IMR-90 (cell line): ENCODE measurements at regions of chr1 and their contacts with region 1.

Region 1: GRCh38 chr1:238252033-238252802 is 361.5 kb upstream of the ZP4 start:
- DNase-seq: peak; percentile 33
- ATAC-seq: peak; percentile 70; the same call in 1 of the 2 replicates
- H3K4me3 ChIP-seq: no peak overlapping the region
- H3K27ac ChIP-seq: no peak overlapping the region
- H3K4me1 ChIP-seq: no peaks in the 10 kb centered on the region
- H3K27me3 ChIP-seq: no peaks in the 10 kb centered on the region
- CTCF ChIP-seq: peak; percentile 45
- POLR2A ChIP-seq: no peak
- RAD21 ChIP-seq: peak; percentile 54

Region 2: DNA sequence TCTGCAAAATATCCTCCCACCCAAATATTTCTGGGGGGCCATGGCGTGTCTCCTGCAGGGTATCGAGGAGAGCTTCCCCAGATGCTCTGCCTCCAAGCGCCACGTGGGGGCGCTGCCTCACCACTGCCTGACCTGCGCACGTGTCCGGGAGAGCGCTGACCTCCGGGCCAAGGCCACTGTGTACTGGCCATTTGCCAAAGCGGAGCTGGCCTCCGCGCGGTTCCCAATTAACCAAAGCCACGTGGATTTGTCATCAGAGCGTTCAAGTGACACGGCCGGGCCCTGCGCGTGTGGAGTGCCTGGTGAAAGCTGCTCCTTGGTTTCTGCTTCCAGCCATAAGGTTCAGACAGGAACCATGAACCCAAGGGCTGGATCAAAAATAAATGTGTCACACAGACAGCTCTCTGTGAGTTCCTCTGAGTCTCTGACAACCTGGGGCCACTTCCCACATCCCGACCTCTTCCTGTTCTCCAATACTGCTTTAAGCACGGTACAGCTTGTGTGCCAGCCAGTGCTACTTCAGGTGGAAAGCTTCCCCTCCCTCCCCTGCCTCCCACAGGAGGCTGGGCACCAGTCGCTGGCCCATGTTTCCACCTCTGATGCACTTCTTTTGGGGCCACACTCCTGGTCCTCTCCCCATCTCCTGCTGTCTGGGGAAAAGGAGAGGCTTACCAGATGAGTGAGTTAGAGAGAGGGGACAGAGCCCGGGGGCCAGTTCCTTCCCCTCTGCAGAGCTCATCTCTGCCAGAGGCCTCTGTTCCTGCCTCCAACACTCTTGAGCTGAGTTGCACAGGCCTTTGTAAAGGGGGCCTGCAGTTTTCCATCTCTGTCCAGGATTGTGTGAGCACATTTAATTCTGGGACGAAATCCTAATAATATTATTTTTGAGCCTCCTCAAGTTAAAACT is 387.6 kb before region 1 on chr1:
- CTCF ChIA-PET with region 1: interaction called, 6 read pairs
- POLR2A ChIA-PET with region 1: no interaction called
- dilution Hi-C with region 1: no loop called
- in situ Hi-C with region 1: no loop called
- intact Hi-C with region 1: loop called (anchors 10 kb)
- DNase-seq: no peak
- ATAC-seq: peak; percentile 79
- H3K4me3 ChIP-seq: peak overlapping the region; percentile 26; the same call in 1 of the 2 replicates
- H3K27ac ChIP-seq: no peak overlapping the region
- H3K4me1 ChIP-seq: no peaks in the 10 kb centered on the region
- H3K27me3 ChIP-seq: no peaks in the 10 kb centered on the region
- CTCF ChIP-seq: peak; percentile 67
- POLR2A ChIP-seq: no peak
- RAD21 ChIP-seq: peak; percentile 72

Region 3: GRCh38 chr1:238690415-238690814 is 438.2 kb after region 1 on chr1:
- CTCF ChIA-PET with region 1: no interaction called
- POLR2A ChIA-PET with region 1: no interaction called
- dilution Hi-C with region 1: no loop called
- in situ Hi-C with region 1: no loop called
- intact Hi-C with region 1: loop called (anchors 1 kb)
- DNase-seq: peak; percentile 35
- ATAC-seq: no peak
- H3K4me3 ChIP-seq: no peak overlapping the region
- H3K27ac ChIP-seq: no peak overlapping the region
- H3K4me1 ChIP-seq: no peaks in the 10 kb centered on the region
- H3K27me3 ChIP-seq: no peaks in the 10 kb centered on the region
- CTCF ChIP-seq: peak; percentile 30
- POLR2A ChIP-seq: no peak
- RAD21 ChIP-seq: peak; percentile 45

Region 4: GRCh38 chr1:239898062-239898730 is 1646.0 kb after region 1 on chr1:
- CTCF ChIA-PET with region 1: no interaction called
- POLR2A ChIA-PET with region 1: no interaction called
- dilution Hi-C with region 1: no loop called
- in situ Hi-C with region 1: no loop called
- intact Hi-C with region 1: loop called (anchors 5 kb)
- DNase-seq: peak; percentile 75
- ATAC-seq: peak; percentile 99
- H3K4me3 ChIP-seq: no peak overlapping the region
- H3K27ac ChIP-seq: no peak overlapping the region
- H3K4me1 ChIP-seq: no peaks in the 10 kb centered on the region
- H3K27me3 ChIP-seq: no peaks in the 10 kb centered on the region; the same call in 1 of the 2 replicates
- CTCF ChIP-seq: peak; percentile 93
- POLR2A ChIP-seq: no peak
- RAD21 ChIP-seq: peak; percentile 94